Activated CD4-positive, alpha-beta T cell treated with anti-CD3 and anti-CD28 coated beads for 36 hours (primary cell): ENCODE measurements at regions of chr20 and their contacts with region 1.

Region 1: DNA sequence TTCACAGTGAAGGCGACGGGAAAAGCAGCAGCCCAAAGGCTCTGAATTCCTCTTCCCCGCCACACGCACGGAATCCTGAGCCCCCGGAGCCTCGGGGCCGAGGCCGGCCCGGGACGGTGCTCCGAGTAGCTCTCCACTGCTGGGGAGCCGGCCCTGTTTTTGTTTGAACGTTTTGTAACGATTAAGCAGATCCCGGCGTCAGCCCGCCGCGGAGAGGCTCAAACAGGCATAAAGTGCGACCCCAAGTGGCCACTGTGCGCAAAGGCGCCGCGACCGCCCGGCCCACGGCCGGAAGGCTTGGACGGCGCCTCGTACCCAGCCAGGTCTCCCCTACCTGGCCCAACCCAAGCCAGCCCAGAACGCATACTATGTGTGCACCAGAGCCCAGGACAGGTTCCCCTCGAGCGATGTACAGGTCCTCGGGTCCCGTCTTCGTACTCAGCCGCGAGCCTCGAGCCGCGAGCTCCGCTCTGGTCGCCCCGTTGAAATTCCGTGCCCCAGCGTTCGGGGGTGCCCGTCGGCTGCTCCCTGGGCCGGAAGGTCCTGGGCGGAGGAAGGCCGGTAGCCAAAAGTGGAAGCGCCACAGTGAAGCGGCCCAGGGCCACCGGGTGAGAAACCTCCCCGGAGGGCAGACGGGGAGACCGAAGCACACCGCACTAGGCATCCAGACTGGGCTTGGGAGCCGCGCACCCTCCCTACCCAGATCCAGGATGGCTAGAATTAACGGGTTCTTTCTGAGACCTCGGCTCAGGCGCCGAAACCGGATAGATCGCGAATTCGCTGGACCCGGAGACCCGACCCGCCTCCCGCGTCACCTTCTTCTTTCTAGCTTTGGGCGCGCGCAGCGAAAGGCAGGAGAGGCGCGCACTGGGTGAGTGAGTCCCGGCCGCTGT is 1.2 kb upstream of the MAFB start:
- DNase-seq: peak; percentile 89
- ATAC-seq: peak; percentile 64
- H3K4me3 Mint-ChIP-seq: peak overlapping the region; percentile 61
- H3K27ac Mint-ChIP-seq: no peak overlapping the region
- H3K4me1 Mint-ChIP-seq: peaks cover 11% of the 10 kb centered on the region
- H3K27me3 Mint-ChIP-seq: peaks cover 74% of the 10 kb centered on the region

Region 2: GRCh38 chr20:39264506-39265172 is 1425.5 kb before region 1 on chr20:
- CTCF ChIA-PET with region 1: interaction called, 3 read pairs
- POLR2A ChIA-PET with region 1: no interaction called
- intact Hi-C with region 1: loop called in 1 of 2 experiments (anchors 2 kb)
- DNase-seq: peak; percentile 73
- ATAC-seq: peak; percentile 89
- H3K4me3 Mint-ChIP-seq: no peak overlapping the region
- H3K27ac Mint-ChIP-seq: no peak overlapping the region
- H3K4me1 Mint-ChIP-seq: peaks cover 2% of the 10 kb centered on the region
- H3K27me3 Mint-ChIP-seq: peaks cover 4% of the 10 kb centered on the region

Region 3: DNA sequence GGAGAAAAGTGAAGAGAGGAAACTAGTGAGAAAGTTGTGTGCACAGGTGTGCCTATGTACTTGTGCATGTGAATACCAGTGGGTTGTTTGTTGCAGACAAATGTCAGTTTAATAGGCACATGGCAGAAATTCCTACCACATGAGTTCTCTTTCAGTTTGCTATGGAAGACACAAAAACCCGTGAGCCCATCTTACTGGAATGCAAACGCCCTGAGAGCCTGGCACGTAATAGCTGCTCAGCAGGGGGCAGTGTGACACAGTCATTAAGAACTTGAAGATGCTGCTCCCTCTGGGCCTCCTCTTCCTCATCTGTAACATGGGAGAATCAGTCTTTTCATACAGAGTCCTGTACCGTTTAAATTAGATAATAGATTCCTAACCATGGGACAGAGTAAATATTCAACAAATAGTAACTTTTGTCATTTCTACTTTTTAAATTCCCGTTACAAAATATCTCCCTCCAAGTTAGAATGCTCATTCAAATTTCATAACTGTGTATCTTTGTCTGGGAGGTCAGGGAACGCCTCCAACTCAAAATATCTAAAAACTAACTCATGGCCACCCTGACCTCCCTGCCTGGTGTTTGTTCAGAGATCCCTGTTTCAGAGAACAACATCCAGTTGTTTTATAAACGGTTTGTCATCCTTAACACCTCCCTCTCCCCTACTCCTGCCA is 804.1 kb before region 1 on chr20:
- CTCF ChIA-PET with region 1: no interaction called
- POLR2A ChIA-PET with region 1: no interaction called
- intact Hi-C with region 1: loop called (anchors 2 to 10 kb)
- DNase-seq: peak; percentile 48
- ATAC-seq: no peak
- H3K4me3 Mint-ChIP-seq: no peak overlapping the region
- H3K27ac Mint-ChIP-seq: no peak overlapping the region
- H3K4me1 Mint-ChIP-seq: no peaks in the 10 kb centered on the region
- H3K27me3 Mint-ChIP-seq: peaks cover 8% of the 10 kb centered on the region

Region 4: GRCh38 chr20:40160097-40160550 is 530.1 kb before region 1 on chr20:
- CTCF ChIA-PET with region 1: no interaction called
- POLR2A ChIA-PET with region 1: no interaction called
- intact Hi-C with region 1: loop called (anchors 1 to 10 kb)
- DNase-seq: peak; percentile 47
- ATAC-seq: peak; percentile 33
- H3K4me3 Mint-ChIP-seq: no peak overlapping the region
- H3K27ac Mint-ChIP-seq: no peak overlapping the region
- H3K4me1 Mint-ChIP-seq: no peaks in the 10 kb centered on the region
- H3K27me3 Mint-ChIP-seq: no peaks in the 10 kb centered on the region

Region 5: DNA sequence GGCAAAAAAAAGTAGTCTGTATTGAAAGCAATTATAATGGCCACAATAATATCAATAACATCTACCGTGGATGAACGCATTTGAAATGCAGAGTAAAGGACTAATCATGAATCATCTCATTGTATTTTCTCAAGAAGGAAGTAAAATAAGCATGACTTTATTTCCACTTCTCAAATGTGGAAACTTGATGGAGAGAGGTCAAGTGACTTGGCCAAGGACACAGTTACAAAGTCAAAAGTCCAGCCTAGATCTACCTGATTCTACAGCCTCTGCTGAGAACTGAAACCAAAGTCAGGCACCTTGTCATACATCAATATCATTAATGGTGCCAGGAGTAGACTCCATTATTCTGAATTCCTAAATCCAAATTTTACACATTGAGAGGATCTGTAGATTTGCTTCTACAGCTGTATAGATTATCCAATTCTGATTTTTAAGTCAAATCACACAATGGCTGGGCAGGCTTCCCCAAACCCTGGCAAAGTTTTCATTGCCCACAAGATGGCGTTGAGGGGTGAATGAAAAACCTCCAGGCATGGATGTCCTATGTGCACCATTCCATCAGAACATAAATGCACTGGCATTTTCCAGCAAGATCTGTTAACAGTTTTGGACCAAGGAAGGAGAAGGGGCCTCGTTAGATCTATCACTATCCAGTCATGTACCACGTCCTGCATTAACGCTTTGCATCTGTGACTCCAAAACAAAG is 424.2 kb before region 1 on chr20:
- CTCF ChIA-PET with region 1: interaction called, 5 read pairs
- POLR2A ChIA-PET with region 1: no interaction called
- intact Hi-C with region 1: loop called in 1 of 2 experiments (anchors 1 kb)
- DNase-seq: peak; percentile 7
- ATAC-seq: no peak
- H3K4me3 Mint-ChIP-seq: no peak overlapping the region
- H3K27ac Mint-ChIP-seq: no peak overlapping the region
- H3K4me1 Mint-ChIP-seq: no peaks in the 10 kb centered on the region
- H3K27me3 Mint-ChIP-seq: peaks cover 2% of the 10 kb centered on the region